Left ventricle myocardium inferior (tissue), 1 donor: ENCODE measurements at regions of chr11 and their contacts with region 1.

Region 1: GRCh38 chr11:2428322-2428795 is 16.0 kb downstream of the TRPM5 start:
- DNase-seq: peak; percentile 71
- H3K4me3 ChIP-seq: no peak overlapping the region
- H3K27ac ChIP-seq: no peak overlapping the region
- H3K4me1 ChIP-seq: no peaks in the 10 kb centered on the region
- H3K27me3 ChIP-seq: peaks cover 13% of the 10 kb centered on the region
- CTCF ChIP-seq: peak; percentile 87

Region 2: DNA sequence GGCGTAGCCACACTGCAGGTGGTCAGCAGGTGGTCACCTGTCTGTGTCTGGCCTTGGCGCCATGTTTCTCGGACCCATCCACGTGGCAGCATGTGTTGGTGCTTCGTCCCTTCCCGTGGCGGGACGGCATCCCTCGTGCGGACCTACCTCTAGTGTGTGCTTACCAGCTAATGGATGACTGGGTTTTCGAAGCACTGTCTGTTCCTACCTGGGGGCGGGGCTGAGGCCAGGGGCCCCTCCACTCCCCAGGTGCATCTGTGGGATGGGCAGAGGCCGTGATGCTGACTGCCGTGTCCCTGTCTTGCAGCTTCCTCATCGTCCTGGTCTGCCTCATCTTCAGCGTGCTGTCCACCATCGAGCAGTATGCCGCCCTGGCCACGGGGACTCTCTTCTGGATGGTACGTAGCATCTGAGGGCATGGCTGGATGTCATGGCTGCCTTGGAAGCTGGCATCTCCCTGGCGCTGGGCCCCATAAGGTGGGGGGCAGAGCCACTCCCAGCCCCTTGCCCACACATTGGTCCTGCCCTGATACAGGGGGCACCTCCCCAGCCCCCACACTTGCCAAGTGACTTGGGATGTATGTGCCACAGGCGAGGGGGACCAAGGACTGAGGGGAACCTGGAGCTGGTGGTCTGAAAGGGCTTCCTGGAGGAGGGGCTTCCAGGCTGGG is 99.4 kb after region 1 on chr11:
- intact Hi-C with region 1: loop called (anchors 2 kb)
- DNase-seq: peak; percentile 14
- H3K4me3 ChIP-seq: no peak overlapping the region
- H3K27ac ChIP-seq: no peak overlapping the region
- H3K4me1 ChIP-seq: peaks cover 27% of the 10 kb centered on the region
- H3K27me3 ChIP-seq: peaks cover 13% of the 10 kb centered on the region
- CTCF ChIP-seq: no peak